Activated CD4-positive, alpha-beta T cell treated with anti-CD3 and anti-CD28 coated beads, Interleukin-2, amount 10 ng/mL, durations not matched to agents 24 days and 14 days (primary cell): ENCODE measurements at regions of chr20 and their contacts with region 1.

Region 1: GRCh38 chr20:2470423-2471193 is at the start of gene SNRPB:
- DNase-seq: peak; percentile 99
- H3K4me3 Mint-ChIP-seq: peak within 1 kb of the TSS; percentile 100
- H3K27ac Mint-ChIP-seq: peak within 1 kb of the TSS; percentile 100
- H3K4me1 Mint-ChIP-seq: peaks cover 48% of the 10 kb centered on the region
- H3K27me3 Mint-ChIP-seq: no peaks in the 10 kb centered on the region
- total RNA-seq, gene SNRPB: 567 and 568 TPM in 2 replicates

Region 2: DNA sequence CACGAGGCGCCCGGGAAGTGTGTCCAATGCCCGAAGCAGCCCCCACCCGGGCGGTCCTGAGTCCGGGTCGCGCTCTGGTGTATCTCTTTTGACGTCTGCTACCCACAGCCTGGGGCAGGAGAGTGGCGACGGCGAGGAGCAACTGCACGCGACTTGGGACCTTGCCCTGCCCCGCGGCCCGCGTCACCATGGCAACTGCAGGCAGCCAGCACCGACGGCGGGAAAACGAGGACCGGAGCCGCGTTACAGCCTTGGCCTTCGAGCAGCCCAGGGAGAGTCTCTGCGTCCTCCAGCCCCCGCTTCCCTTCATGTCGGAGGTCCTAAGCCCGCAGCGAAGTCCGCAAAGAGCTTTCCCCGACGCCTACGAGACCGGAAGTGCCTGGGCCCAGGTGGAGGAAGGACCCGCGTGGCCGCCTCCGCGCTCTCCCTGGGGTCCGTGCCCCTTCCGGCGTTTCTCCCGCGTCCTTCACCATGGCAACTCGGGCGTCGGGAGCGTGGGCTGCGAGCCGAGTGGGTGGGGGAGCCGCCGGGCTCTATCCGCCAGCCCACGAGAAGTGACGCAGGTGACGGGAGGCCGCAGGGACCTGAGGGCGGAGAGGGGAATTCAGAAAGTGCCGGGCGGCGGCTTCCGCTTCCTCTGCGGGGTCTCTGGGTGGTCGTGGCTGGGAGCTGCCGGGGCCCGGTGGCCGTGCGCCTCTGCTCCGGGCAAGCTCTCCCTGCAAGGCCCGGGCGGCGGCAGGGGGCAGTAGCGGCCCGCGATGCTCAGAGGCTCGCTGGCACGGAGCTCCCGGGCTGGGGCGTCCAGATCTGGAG is 263.4 kb before region 1 on chr20:
- intact Hi-C with region 1: loop called (anchors 1 kb)
- DNase-seq: peak; percentile 88
- H3K4me3 Mint-ChIP-seq: peak overlapping the region; percentile 81
- H3K27ac Mint-ChIP-seq: peak overlapping the region; percentile 83
- H3K4me1 Mint-ChIP-seq: peaks cover 5% of the 10 kb centered on the region
- H3K27me3 Mint-ChIP-seq: peaks cover 18% of the 10 kb centered on the region

Region 3: DNA sequence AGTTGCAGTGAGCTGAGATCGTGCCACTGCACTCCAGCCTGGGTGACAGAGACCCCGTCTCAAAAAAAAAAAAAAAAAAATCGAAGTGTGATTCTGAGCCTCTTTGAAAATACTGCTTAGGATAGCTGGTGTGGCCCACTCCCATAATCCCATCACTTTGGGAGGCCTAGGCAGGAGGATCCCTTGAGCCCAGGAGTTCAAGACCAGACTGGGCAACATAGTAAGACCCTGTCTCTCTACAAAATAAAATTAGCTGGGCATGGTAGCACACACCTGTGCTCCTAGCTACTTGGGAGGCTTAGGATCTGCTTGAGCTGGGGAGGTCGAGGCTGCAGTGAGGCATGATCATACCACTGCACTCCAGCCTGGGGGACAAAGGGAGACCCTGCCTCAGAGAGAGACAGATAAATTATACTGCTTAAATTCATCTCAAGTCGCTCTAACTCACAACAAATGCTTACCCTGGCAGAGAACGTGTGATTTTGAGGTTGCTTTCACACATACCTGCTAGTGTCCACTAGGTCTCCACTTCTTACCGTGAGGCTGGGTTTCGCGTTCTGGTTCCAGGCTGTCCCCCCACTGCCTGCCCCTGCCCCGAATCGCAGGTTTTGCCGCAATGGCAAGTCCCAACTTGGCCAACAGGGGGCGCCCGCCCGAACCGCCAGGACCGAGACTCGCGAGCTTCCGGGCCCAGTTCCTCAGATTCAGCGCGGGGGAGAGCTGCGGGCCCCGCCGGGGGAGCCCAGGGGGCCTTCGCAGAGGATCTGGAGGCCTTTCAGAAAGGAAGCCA is 53.5 kb after region 1 on chr20:
- intact Hi-C with region 1: loop called (anchors 1 kb)
- DNase-seq: peak; percentile 98
- H3K4me3 Mint-ChIP-seq: peak overlapping the region; percentile 85
- H3K27ac Mint-ChIP-seq: peak overlapping the region; percentile 93
- H3K4me1 Mint-ChIP-seq: peaks cover 20% of the 10 kb centered on the region
- H3K27me3 Mint-ChIP-seq: peaks cover 5% of the 10 kb centered on the region

Region 4: DNA sequence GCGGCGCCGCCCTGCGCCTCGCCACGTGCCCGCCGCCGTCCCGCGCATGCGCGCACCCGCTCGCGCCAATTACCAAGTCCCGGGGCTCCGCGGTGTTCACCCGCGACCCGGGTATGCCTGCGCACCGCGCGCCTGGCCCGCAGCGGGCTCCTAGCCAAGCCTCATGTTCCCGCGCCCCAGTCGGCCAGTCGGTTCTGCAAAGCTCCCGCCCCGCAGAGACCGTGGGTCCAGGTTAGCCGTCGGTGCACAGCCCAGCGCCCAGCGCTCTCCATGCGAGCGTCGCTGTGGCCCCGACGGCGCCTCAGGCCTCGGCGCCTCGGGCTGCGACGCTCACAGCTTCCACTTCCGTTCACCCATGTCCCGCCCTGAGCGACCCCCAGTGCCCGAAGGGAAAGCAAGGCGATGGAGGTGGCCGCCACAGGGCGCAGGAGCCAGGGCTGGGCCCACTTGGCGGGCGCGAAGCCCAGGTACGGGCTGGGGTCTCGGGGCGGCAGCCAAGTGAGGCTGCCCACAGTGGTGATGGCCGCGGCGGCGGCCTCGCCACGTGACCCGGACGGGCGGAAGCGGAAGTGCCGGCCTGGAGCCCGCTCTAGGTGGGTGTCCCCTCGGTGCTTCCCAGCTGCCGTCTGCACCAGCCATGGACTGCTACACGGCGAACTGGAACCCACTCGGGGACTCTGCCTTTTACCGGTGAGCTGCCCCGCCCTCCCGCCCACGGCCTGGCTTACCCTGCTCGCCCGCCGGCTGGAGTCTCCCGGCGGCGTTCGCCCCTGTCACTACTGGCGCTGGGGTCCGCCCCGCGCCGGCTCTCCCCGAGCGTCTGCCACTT is 369.7 kb after region 1 on chr20 and contains the starts of genes PCED1A and VPS16:
- intact Hi-C with region 1: loop called (anchors 5 kb)
- DNase-seq: peak; percentile 97
- H3K4me3 Mint-ChIP-seq: peak within 1 kb of the TSS; percentile 91
- H3K27ac Mint-ChIP-seq: peak within 1 kb of the TSS; percentile 91
- H3K4me1 Mint-ChIP-seq: peaks cover 20% of the 10 kb centered on the region
- H3K27me3 Mint-ChIP-seq: peaks cover 1% of the 10 kb centered on the region
- total RNA-seq, gene PCED1A: 23.4 and 26.1 TPM in 2 replicates
- total RNA-seq, gene VPS16: 44.3 and 44.9 TPM in 2 replicates